Pancreas (tissue), 10 donors: ENCODE measurements at regions of chr6 and their contacts with region 1.

Region 1: GRCh38 chr6:50128420-50129005 is 78.8 kb upstream of the DEFB112 start:
- DNase-seq: no peak
- ATAC-seq: no peak
- H3K4me3 ChIP-seq: no peak overlapping the region
- H3K27ac ChIP-seq: no peak overlapping the region
- H3K4me1 ChIP-seq: no peaks in the 10 kb centered on the region
- H3K27me3 ChIP-seq: peaks cover 0 to 20% (median 4%) of the 10 kb centered on the region in 4 donors
- CTCF ChIP-seq: peak in 3 of 4 donors; percentile 7 to 39 (median 38)

Region 2: DNA sequence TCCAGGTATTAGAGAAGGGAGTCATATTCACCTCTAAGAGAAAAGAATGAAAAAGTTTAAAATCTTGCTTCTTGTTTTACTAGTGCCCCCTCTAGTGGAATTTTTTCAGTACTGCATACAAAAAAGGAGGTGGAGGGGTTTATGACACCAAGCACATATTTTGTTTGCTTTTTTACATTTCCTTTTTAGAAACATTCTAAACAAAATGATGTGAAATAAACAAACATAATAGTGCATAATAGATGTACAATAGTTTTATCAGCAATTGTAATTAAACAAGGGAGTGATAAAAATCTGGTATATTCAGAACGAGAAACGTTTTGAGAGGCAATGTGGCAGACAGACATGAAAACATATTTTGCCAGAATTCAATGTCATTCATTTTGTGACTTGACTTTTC is 473.8 kb after region 1 on chr6:
- intact Hi-C with region 1: loop called in 1 of 3 experiments (anchors 10 kb)
- DNase-seq: no peak
- ATAC-seq: peak in 2 of 4 donors; percentile 32 to 47
- H3K4me3 ChIP-seq: no peak overlapping the region
- H3K27ac ChIP-seq: no peak overlapping the region
- H3K4me1 ChIP-seq: no peaks in the 10 kb centered on the region
- H3K27me3 ChIP-seq: peaks cover 0 to 4% (median 0%) of the 10 kb centered on the region in 4 donors
- CTCF ChIP-seq: peak; percentile 58 to 80 (median 62)